ENCODE measurements at regions of chr4 and their contacts with region 1.

Region 1: DNA sequence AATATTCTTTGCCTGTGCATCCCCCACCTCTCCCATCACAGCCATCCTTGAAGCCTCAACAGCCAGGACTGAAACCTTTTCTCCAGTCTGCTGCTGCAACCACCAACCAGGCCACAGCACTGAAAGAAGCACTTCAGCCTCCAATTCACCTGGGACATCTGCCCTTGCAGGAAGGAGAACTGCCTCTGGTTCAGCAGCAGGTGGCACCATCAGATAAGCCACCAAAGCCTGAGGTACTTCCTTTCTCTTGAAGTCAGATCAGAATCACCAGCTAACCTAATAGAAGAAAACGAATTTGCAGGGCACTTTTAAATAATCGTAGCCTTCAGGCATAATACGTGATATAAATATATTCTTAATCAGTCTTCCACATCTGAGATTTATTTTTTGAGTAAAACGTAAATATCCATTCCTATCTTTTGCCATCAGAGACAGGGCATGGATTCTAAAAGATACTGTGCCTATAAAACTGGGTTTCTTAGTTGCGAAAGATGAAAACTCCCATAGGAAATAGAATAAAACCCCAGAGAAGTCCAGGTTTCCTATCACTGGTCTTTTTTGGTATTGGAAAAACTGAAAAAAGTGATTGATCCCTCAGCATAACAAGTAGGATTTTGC is 9.5 kb downstream of the AMBN start:
- DNase-seq: peak; percentile 58 to 76
- ATAC-seq: peak; percentile 69
- H3K4me3 ChIP-seq: no peak overlapping the region
- H3K27ac ChIP-seq: no peak overlapping the region
- H3K4me1 ChIP-seq: no peaks in the 10 kb centered on the region
- H3K27me3 ChIP-seq: no peaks in the 10 kb centered on the region

Region 2: DNA sequence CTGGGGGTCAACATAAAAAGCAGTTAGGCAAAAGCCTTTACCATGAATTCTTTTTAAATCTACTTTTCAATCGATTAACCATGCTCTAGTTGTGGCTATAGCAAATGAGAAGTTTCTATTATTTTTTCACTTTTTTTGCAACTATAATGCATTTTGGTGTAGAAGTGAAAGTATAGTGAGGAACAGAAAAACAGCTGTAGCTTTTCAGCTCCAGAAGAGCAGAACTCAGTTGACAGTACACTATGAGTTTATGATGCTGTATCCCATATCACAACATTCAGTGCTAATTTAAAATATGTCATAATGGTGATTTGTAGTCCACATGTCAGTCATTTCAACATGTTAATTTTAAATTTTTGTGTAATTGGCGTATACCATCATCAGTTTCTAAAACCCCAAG is 138.2 kb before region 1 on chr4:
- intact Hi-C with region 1: no loop called
- DNase-seq: no peak
- ATAC-seq: no peak
- H3K4me3 ChIP-seq: no peak overlapping the region
- H3K27ac ChIP-seq: no peak overlapping the region
- H3K4me1 ChIP-seq: no peaks in the 10 kb centered on the region
- H3K27me3 ChIP-seq: no peaks in the 10 kb centered on the region

Region 3: DNA sequence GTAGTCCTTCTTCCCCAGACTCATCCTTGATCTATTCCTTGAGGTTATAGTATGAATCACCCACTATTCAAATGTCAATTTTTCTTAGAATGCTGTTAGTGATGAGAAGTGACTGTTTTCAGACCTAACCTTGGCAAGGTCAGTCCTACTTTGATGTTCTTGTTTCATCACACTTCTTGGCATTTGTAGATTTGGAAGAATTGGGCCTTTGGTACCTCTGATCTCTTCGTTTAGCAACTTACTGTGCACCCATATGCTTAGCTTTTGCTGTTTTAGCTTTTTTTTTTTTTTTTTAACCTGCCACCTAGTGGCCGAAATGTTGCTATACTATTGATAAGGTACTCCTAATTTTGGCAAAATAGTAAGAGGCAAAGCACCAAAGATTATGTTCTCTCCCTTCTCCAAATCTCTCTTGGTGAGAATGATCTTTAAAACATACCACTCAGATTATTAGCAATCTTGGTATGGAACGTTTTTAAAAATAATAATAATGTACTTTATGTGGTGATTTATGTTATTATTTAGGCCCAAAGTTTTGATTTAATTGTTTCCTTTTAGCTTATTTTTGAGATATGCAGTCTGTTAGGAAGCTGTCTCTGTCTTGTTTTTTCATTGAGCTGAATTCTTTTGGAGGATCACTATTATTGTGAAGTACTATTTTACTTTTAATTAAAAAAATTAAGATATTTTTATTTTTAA is 408.5 kb after region 1 on chr4:
- intact Hi-C with region 1: loop called in 1 of 2 experiments (anchors 5 kb)
- DNase-seq: no peak
- ATAC-seq: no peak
- H3K4me3 ChIP-seq: no peak overlapping the region
- H3K27ac ChIP-seq: no peak overlapping the region
- H3K4me1 ChIP-seq: no peaks in the 10 kb centered on the region
- H3K27me3 ChIP-seq: no peaks in the 10 kb centered on the region

Measured in aorta (tissue), 5 donors.